Activated naive CD4-positive, alpha-beta T cell treated with anti-CD3 and anti-CD28 coated beads for 36 hours (primary cell): ENCODE measurements at regions of chr14 and their contacts with region 1.

Region 1: DNA sequence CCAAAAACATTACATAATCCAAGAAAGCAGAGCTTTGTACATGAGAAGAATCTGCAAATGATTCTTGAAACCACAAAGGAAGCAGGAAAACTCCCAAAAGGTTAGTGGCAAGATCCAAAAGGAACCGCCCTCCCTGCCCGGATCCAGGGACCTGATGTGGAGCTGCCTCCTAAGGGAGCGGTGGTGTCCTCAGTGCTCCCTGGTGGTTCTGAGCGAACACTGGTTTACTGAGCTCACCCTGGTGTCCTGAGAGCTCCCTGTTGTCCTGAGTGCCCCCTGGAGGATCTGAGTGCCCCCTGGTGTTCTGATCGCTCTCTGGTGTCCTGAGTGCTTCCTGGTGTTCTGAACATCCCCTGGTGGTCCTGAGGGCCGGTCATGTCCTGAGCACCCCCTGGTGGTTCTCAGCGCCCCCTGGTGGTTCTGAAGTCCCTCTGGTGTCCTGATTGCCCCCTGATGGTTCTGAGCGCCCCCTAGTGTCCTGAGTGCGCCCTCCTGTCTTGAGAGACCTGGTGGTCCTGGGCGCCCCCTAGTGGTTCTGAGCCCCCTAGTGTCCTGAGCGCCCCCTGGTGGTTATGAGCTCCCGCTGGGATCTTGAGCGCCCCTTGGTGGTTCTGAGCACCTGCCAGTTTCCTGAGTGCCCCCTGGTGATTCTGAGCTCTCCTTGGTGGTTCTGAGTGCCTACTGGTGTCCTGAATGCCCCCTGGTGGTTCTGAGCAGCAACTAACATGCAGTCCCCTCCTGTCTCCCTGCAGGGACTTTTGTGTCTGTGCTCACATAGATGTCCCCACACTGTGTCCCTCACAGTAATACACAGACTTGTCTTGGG is 891.1 kb downstream of the TMEM121 start:
- DNase-seq: peak; percentile 97
- H3K4me3 Mint-ChIP-seq: no peak overlapping the region
- H3K27ac Mint-ChIP-seq: no peak overlapping the region
- H3K4me1 Mint-ChIP-seq: peaks cover 15% of the 10 kb centered on the region
- H3K27me3 Mint-ChIP-seq: peaks cover 4% of the 10 kb centered on the region

Region 2: GRCh38 chr14:104657101-104657524 is 1760.3 kb before region 1 on chr14:
- CTCF ChIA-PET with region 1: no interaction called
- intact Hi-C with region 1: no loop called
- DNase-seq: no peak
- H3K4me3 Mint-ChIP-seq: no peak overlapping the region
- H3K27ac Mint-ChIP-seq: no peak overlapping the region
- H3K4me1 Mint-ChIP-seq: peaks cover 29% of the 10 kb centered on the region
- H3K27me3 Mint-ChIP-seq: no peaks in the 10 kb centered on the region

Region 3: GRCh38 chr14:106228541-106229158 is 188.8 kb before region 1 on chr14:
- CTCF ChIA-PET with region 1: interaction called, 11 read pairs
- intact Hi-C with region 1: no loop called
- DNase-seq: peak; percentile 78
- H3K4me3 Mint-ChIP-seq: peak overlapping the region; percentile 73
- H3K27ac Mint-ChIP-seq: peak overlapping the region; percentile 91
- H3K4me1 Mint-ChIP-seq: peaks cover 68% of the 10 kb centered on the region
- H3K27me3 Mint-ChIP-seq: no peaks in the 10 kb centered on the region

Region 4: GRCh38 chr14:106248321-106249192 is 168.9 kb before region 1 on chr14:
- CTCF ChIA-PET with region 1: no interaction called
- intact Hi-C with region 1: no loop called
- DNase-seq: no peak
- H3K4me3 Mint-ChIP-seq: no peak overlapping the region
- H3K27ac Mint-ChIP-seq: no peak overlapping the region
- H3K4me1 Mint-ChIP-seq: peaks cover 9% of the 10 kb centered on the region
- H3K27me3 Mint-ChIP-seq: peaks cover 3% of the 10 kb centered on the region

Region 5: GRCh38 chr14:106308839-106309389 is 108.5 kb before region 1 on chr14:
- CTCF ChIA-PET with region 1: interaction called, 13 read pairs
- intact Hi-C with region 1: no loop called
- DNase-seq: peak; percentile 97
- H3K4me3 Mint-ChIP-seq: no peak overlapping the region
- H3K27ac Mint-ChIP-seq: no peak overlapping the region
- H3K4me1 Mint-ChIP-seq: no peaks in the 10 kb centered on the region
- H3K27me3 Mint-ChIP-seq: no peaks in the 10 kb centered on the region

Region 6: DNA sequence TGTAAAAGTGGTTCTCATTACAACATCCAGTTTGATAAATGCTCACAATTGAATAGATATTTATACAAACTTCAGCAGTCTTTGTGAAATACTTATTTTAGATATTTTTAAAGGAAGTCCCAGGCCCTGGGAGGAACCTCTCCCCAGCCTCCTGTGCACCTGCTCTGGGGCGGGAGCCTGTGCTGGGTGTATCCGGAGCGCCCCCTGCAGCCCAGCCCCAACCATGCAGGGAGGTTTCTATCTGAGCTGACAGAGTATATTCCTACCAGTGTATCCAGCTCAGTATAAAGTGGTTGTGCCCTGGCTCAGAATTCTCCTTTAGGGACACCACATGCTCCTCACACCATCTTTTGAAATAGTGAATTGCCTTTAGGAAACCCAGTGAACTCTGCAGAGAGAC is 39.2 kb before region 1 on chr14:
- CTCF ChIA-PET with region 1: interaction called, 75 read pairs
- intact Hi-C with region 1: loop called (anchors 1 kb)
- DNase-seq: peak; percentile 74
- H3K4me3 Mint-ChIP-seq: no peak overlapping the region
- H3K27ac Mint-ChIP-seq: no peak overlapping the region
- H3K4me1 Mint-ChIP-seq: peaks cover 23% of the 10 kb centered on the region
- H3K27me3 Mint-ChIP-seq: no peaks in the 10 kb centered on the region

Region 7: GRCh38 chr14:106442857-106443256 is 25.4 kb after region 1 on chr14:
- CTCF ChIA-PET with region 1: interaction called, 28 read pairs
- intact Hi-C with region 1: no loop called
- DNase-seq: peak; percentile 69
- H3K4me3 Mint-ChIP-seq: no peak overlapping the region
- H3K27ac Mint-ChIP-seq: no peak overlapping the region
- H3K4me1 Mint-ChIP-seq: peaks cover 6% of the 10 kb centered on the region
- H3K27me3 Mint-ChIP-seq: peaks cover 16% of the 10 kb centered on the region

Region 8: GRCh38 chr14:106511006-106511799 is 93.8 kb after region 1 on chr14:
- CTCF ChIA-PET with region 1: interaction called, 40 read pairs
- intact Hi-C with region 1: loop called (anchors 2 kb)
- DNase-seq: peak; percentile 72
- H3K4me3 Mint-ChIP-seq: no peak overlapping the region
- H3K27ac Mint-ChIP-seq: peak overlapping the region; percentile 16
- H3K4me1 Mint-ChIP-seq: peaks cover 76% of the 10 kb centered on the region
- H3K27me3 Mint-ChIP-seq: no peaks in the 10 kb centered on the region